Motor neuron (in vitro differentiated cells): ENCODE measurements at regions of chr2 and their contacts with region 1.

Region 1: GRCh38 chr2:176126929-176127773 is 2.4 kb upstream of the HOXD8 start:
- ATAC-seq: no peak
- H3K4me3 ChIP-seq: peak overlapping the region; percentile 55 to 99 (median 80)
- H3K27ac ChIP-seq: no peak overlapping the region
- H3K4me1 ChIP-seq: peaks cover 16 to 21% of the 10 kb centered on the region in 2 donors

Region 2: GRCh38 chr2:175837046-175837445 is 290.1 kb before region 1 on chr2:
- in situ Hi-C with region 1: no loop called
- ATAC-seq: peak in 6 of 8 experiments; percentile 24 to 98 (median 40)
- H3K4me3 ChIP-seq: no peak overlapping the region
- H3K27ac ChIP-seq: no peak overlapping the region
- H3K4me1 ChIP-seq: peaks cover 5 to 22% of the 10 kb centered on the region in 2 donors

Region 3: GRCh38 chr2:175964195-175964594 is 163.0 kb before region 1 on chr2:
- in situ Hi-C with region 1: no loop called
- ATAC-seq: no peak
- H3K4me3 ChIP-seq: no peak overlapping the region
- H3K27ac ChIP-seq: no peak overlapping the region
- H3K4me1 ChIP-seq: no peaks in the 10 kb centered on the region

Region 4: GRCh38 chr2:176035013-176035691 is 92.0 kb before region 1 on chr2:
- in situ Hi-C with region 1: no loop called
- ATAC-seq: no peak
- H3K4me3 ChIP-seq: no peak overlapping the region
- H3K27ac ChIP-seq: no peak overlapping the region
- H3K4me1 ChIP-seq: no peaks in the 10 kb centered on the region

Region 5: DNA sequence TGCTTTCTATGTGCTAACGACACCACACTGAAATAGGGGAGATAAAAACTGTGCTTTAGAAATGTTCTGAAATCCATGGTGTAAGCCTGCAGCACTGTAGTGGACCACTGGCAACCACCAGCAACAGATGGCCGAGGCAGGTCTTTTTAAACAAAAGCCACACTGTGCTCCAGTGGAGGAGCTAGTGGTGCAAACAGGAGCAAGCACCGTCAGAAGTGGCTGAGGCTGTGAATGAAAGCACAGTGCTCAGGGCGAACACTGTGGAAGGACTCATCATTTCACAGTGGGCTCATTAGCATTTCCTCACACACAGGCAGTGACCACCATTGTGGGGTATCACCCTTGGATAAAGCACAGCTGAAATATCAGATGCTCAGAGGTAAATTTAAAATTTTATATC is 119.2 kb after region 1 on chr2:
- in situ Hi-C with region 1: no loop called
- ATAC-seq: peak in 4 of 8 experiments; percentile 24 to 51 (median 32)
- H3K4me3 ChIP-seq: no peak overlapping the region
- H3K27ac ChIP-seq: no peak overlapping the region
- H3K4me1 ChIP-seq: peaks cover 0 to 10% of the 10 kb centered on the region in 2 donors

Region 6: GRCh38 chr2:176638167-176639015 is 511.2 kb after region 1 on chr2:
- in situ Hi-C with region 1: loop called in 8 of 9 experiments (anchors 5 to 25 kb)
- ATAC-seq: peak; percentile 65 to 96 (median 90)
- H3K4me3 ChIP-seq: peak overlapping the region; percentile 46 to 56 (median 49)
- H3K27ac ChIP-seq: no peak overlapping the region
- H3K4me1 ChIP-seq: peaks cover 0 to 22% of the 10 kb centered on the region in 2 donors

Region 7: GRCh38 chr2:176643646-176644045 is 516.5 kb after region 1 on chr2:
- in situ Hi-C with region 1: loop called (anchors 5 to 25 kb)
- ATAC-seq: peak in 5 of 8 experiments; percentile 95 to 100 (median 99)
- H3K4me3 ChIP-seq: no peak overlapping the region
- H3K27ac ChIP-seq: no peak overlapping the region
- H3K4me1 ChIP-seq: peaks cover 7 to 8% of the 10 kb centered on the region in 2 donors

Region 8: GRCh38 chr2:177155631-177156030 is 1028.5 kb after region 1 on chr2:
- in situ Hi-C with region 1: loop called in 6 of 9 experiments (anchors 10 to 25 kb)
- ATAC-seq: no peak
- H3K4me3 ChIP-seq: no peak overlapping the region
- H3K27ac ChIP-seq: no peak overlapping the region
- H3K4me1 ChIP-seq: no peaks in the 10 kb centered on the region